CD8-positive, alpha-beta memory T cell (primary cell): ENCODE measurements at regions of chr6 and their contacts with region 1.

Region 1: DNA sequence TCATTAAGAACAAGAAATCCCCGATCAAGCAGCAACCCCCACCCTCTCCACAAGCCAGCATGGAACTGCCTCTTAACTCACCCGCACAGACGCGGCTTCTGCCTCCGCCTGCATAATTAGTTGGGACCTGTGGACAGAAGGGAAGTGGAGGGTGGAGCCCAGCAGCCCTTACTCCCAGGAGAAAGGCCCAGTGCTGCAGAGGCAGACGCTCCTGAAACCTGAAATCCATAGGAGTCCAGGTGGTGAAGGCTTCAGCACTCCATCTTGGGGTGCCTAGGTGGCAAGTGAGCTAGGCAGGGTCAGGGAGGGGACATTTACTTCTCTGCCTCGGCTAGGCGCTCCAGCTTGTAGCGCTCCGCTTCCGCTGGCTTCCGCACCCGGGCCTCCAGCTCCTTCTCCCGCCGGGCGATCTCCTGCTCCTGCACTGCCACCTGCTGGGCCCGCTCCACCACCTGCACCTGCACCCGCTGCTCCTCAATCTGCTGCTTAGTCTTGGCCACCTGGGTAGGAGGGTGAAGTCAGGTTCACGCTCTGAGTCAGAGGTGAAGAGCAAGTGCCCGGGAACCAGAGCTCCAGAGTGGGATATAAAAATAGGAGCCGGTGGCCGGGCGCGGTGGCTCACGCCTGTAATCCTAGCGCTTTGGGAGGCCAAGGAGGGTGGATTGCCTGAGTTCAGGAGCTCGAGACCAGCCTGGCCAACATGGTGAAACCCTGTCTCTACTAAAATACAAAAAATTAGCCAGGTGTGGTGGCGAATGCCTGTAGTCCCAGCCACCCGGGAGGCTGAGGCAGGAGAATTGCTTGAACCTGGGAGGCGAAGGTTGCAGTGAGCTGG is 10.7 kb downstream of the TUBB start:
- DNase-seq: peak; percentile 71 to 86 (median 73)
- H3K4me3 ChIP-seq: no peak overlapping the region
- H3K4me3 Mint-ChIP-seq: peak overlapping the region in 4 of 7 donors; percentile 23 to 43 (median 34)
- H3K27ac ChIP-seq: no peak overlapping the region
- H3K27ac Mint-ChIP-seq: peak overlapping the region in 7 of 8 donors; percentile 47 to 86 (median 65)
- H3K4me1 ChIP-seq: peaks cover 33% of the 10 kb centered on the region
- H3K4me1 Mint-ChIP-seq: peaks cover 23 to 49% (median 32%) of the 10 kb centered on the region in 3 donors
- H3K27me3 ChIP-seq: no peaks in the 10 kb centered on the region
- H3K27me3 Mint-ChIP-seq: no peaks in the 10 kb centered on the region

Region 2: DNA sequence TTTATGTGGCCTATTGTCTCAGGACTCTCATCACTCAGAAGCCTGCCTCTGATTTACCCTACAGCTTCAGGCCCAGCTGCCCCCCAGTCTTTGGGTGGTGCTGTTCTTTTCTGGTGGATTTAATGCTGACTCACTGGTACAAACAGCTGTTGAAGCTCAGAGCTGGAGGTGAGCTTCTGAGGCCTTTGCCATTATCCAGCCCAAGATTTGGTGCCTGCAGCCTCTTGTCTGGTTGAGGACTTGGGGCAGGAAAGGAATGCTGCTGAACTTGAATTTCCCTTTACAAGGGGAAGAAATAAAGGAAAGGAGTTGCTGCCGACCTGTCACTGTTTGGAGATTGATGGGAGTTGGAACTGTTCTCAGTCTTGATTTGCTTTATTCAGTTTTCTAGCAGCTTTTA is 139.8 kb before region 1 on chr6:
- CTCF ChIA-PET with region 1: interaction called, 12 read pairs
- POLR2A ChIA-PET with region 1: no interaction called
- DNase-seq: no peak
- H3K4me3 ChIP-seq: no peak overlapping the region
- H3K4me3 Mint-ChIP-seq: no peak overlapping the region
- H3K27ac ChIP-seq: no peak overlapping the region
- H3K27ac Mint-ChIP-seq: peak overlapping the region in 4 of 8 donors; percentile 69 to 85 (median 72)
- H3K4me1 ChIP-seq: no peaks in the 10 kb centered on the region
- H3K4me1 Mint-ChIP-seq: peaks cover 2 to 13% (median 7%) of the 10 kb centered on the region in 3 donors
- H3K27me3 ChIP-seq: no peaks in the 10 kb centered on the region
- H3K27me3 Mint-ChIP-seq: no peaks in the 10 kb centered on the region

Region 3: DNA sequence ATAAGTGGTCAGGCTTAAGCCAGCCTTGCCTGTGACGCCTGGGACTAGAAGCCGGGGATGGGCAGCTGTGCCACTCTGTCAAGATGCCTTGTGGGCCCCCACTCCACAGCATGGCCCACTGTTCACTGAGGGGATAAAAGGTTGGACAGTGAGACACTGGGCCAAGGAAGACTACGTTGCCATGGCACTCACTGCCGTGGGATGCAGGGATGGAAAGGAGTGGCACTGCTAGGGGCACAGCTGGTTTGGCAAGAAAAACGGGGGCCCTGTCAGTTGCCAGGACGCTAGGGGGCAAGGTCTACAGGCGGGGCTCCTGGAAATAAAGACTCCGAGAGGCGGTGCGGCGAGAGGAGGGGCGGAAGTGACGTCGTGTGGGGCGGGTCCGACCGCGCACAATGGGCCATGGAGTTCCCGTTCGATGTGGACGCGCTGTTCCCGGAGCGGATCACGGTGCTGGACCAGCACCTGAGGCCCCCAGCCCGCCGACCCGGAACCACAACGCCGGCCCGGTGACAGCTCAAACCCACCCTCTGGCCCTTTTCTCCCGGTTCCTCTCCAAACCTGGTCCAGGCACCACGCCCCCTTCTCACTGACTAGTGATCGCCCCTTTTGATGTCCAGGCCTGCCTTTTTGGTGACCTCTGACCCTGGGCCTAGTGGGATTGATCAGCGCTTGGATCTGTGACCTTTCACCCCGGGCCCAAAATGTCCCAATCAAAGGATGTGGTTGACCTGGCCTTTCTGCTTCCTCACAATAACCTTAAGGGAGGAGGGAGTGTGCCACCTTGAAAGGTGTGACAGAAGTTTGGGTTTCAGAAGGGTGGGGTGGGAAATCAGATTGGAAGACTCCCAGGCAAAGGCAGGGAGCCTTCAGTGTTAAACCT is 104.1 kb before region 1 on chr6 and contains the start of gene ATAT1:
- CTCF ChIA-PET with region 1: interaction called, 14 read pairs
- POLR2A ChIA-PET with region 1: no interaction called
- DNase-seq: peak; percentile 86 to 93 (median 88)
- H3K4me3 ChIP-seq: peak within 1 kb of the TSS; percentile 76
- H3K4me3 Mint-ChIP-seq: peak within 1 kb of the TSS; percentile 86 to 95 (median 93)
- H3K27ac ChIP-seq: peak within 1 kb of the TSS; percentile 89
- H3K27ac Mint-ChIP-seq: peak within 1 kb of the TSS; percentile 82 to 99 (median 98)
- H3K4me1 ChIP-seq: peaks cover 16% of the 10 kb centered on the region
- H3K4me1 Mint-ChIP-seq: peaks cover 19 to 25% (median 19%) of the 10 kb centered on the region in 3 donors
- H3K27me3 ChIP-seq: no peaks in the 10 kb centered on the region
- H3K27me3 Mint-ChIP-seq: no peaks in the 10 kb centered on the region
- total RNA-seq, gene ATAT1: 10.5 to 10.7 TPM

Region 4: DNA sequence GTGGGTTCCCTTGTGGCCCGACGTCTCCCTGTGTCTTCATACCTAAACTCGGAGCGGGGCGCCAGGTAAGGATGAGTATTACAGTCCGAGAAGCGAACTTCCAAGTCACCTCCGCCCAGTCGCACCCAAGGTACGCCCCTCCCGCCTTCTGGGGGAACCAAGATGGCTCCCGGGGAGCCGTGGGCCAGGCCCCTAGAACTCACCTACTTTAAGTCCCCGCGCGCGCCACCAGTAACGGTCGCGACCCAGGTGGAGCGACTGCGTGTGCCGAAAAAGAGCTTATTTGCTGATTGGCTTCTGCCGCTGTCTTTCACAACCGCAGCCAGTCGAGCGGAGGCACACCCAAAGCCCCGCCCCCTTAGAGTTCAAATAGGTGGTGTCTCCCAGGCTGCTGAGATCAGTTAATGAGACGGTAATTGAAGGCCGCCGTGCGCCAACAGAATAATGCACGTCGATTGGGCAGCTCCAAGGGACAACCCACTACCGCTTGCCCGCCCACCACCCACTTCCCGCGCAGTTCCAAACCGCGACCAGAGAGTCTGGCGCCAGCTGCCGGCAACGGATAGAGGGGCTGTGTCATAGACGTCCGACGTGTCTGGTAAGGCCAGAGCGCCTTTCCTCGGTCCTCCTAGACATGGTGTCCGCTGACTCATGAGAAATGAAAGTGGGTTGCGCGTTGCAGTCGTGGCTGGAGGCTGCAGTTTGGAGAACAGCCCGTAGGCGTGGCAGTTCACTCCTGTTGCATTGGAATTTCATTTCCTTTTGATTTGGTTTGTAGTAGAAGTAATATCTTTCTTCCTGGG is 13.6 kb before region 1 on chr6 and contains the start of gene MDC1:
- CTCF ChIA-PET with region 1: interaction called, 48 read pairs
- POLR2A ChIA-PET with region 1: interaction called, 6 read pairs
- DNase-seq: peak; percentile 97 to 100 (median 99)
- H3K4me3 ChIP-seq: peak within 1 kb of the TSS; percentile 85
- H3K4me3 Mint-ChIP-seq: peak within 1 kb of the TSS; percentile 90 to 98 (median 94)
- H3K27ac ChIP-seq: peak within 1 kb of the TSS; percentile 92
- H3K27ac Mint-ChIP-seq: peak within 1 kb of the TSS; percentile 92 to 100 (median 99)
- H3K4me1 ChIP-seq: peaks cover 20% of the 10 kb centered on the region
- H3K4me1 Mint-ChIP-seq: peaks cover 45 to 64% (median 46%) of the 10 kb centered on the region in 3 donors
- H3K27me3 ChIP-seq: no peaks in the 10 kb centered on the region
- H3K27me3 Mint-ChIP-seq: peaks cover 0 to 2% of the 10 kb centered on the region in 2 donors
- total RNA-seq, gene MDC1: 59.4 to 71.1 TPM

Region 5: GRCh38 chr6:30760549-30760948 is 29.7 kb after region 1 on chr6:
- CTCF ChIA-PET with region 1: no interaction called
- POLR2A ChIA-PET with region 1: no interaction called
- DNase-seq: no peak
- H3K4me3 ChIP-seq: no peak overlapping the region
- H3K4me3 Mint-ChIP-seq: no peak overlapping the region
- H3K27ac ChIP-seq: no peak overlapping the region
- H3K27ac Mint-ChIP-seq: no peak overlapping the region
- H3K4me1 ChIP-seq: peaks cover 12% of the 10 kb centered on the region
- H3K4me1 Mint-ChIP-seq: peaks cover 13 to 21% (median 19%) of the 10 kb centered on the region in 3 donors
- H3K27me3 ChIP-seq: no peaks in the 10 kb centered on the region
- H3K27me3 Mint-ChIP-seq: peaks cover 0 to 3% of the 10 kb centered on the region in 2 donors

Region 6: DNA sequence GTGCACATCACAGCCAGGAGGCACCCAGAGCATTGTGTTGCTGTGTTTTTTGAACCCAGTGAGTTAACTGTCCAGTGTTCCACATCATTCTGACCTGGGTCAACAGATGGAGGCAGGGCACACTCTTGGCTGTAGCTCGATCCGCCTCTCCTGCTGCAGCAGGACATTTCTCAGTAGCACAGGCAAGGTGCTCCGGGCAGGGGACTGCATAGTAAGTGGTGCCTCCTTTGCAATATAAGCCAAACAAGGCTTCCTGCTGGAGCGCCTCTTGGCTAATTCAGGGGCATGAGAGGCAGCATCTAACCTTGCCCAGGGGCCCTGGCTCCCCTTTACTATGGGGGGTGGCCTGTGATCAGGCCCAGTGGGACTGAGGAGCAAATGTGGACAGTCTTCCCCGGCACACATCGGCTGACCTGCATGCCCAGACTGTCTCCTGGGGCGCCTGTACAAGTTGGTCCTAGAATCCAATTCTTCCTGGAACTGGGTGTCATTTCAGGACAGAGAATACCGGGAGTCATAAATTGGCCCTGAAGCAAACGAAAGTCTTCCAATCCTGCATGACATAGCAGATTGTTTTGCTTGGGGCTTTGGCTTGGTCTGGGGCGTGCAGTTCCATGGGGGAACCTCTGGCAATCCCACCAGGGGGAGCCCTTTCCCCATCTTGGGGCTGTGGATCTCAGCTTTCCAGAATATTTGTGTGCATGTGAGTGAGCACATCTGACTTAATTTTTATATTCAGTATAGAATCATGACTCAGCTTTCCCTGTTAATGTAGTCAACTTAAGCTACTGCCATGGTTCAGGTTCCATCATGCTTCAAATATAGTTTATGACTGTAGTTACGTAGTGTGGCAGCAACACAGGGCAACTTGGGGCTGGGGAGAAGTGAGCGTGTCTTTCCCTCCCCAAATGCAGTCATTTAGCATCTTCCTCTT is 97.5 kb after region 1 on chr6:
- CTCF ChIA-PET with region 1: interaction called, 11 read pairs
- POLR2A ChIA-PET with region 1: no interaction called
- DNase-seq: peak; percentile 62 to 83 (median 67)
- H3K4me3 ChIP-seq: peak overlapping the region; percentile 73
- H3K4me3 Mint-ChIP-seq: peak overlapping the region; percentile 89 to 94 (median 93)
- H3K27ac ChIP-seq: peak overlapping the region; percentile 76
- H3K27ac Mint-ChIP-seq: peak overlapping the region; percentile 37 to 100 (median 95)
- H3K4me1 ChIP-seq: peaks cover 44% of the 10 kb centered on the region
- H3K4me1 Mint-ChIP-seq: peaks cover 69 to 90% (median 79%) of the 10 kb centered on the region in 3 donors
- H3K27me3 ChIP-seq: no peaks in the 10 kb centered on the region
- H3K27me3 Mint-ChIP-seq: peaks cover 0 to 4% of the 10 kb centered on the region in 2 donors

Region 7: GRCh38 chr6:30857549-30857948 is 126.7 kb after region 1 on chr6:
- CTCF ChIA-PET with region 1: no interaction called
- POLR2A ChIA-PET with region 1: no interaction called
- DNase-seq: no peak
- H3K4me3 ChIP-seq: no peak overlapping the region
- H3K4me3 Mint-ChIP-seq: no peak overlapping the region
- H3K27ac ChIP-seq: no peak overlapping the region
- H3K27ac Mint-ChIP-seq: no peak overlapping the region
- H3K4me1 ChIP-seq: no peaks in the 10 kb centered on the region
- H3K4me1 Mint-ChIP-seq: no peaks in the 10 kb centered on the region
- H3K27me3 ChIP-seq: no peaks in the 10 kb centered on the region
- H3K27me3 Mint-ChIP-seq: peaks cover 3 to 10% of the 10 kb centered on the region in 2 donors

Region 8: GRCh38 chr6:30990422-30991086 is 259.7 kb after region 1 on chr6:
- CTCF ChIA-PET with region 1: no interaction called
- POLR2A ChIA-PET with region 1: no interaction called
- DNase-seq: peak in 1 of 5 donors; percentile 17
- H3K4me3 ChIP-seq: no peak overlapping the region
- H3K4me3 Mint-ChIP-seq: peak overlapping the region; percentile 40 to 88 (median 76)
- H3K27ac ChIP-seq: no peak overlapping the region
- H3K27ac Mint-ChIP-seq: peak overlapping the region in 5 of 8 donors; percentile 3 to 75 (median 49)
- H3K4me1 ChIP-seq: peaks cover 4% of the 10 kb centered on the region
- H3K4me1 Mint-ChIP-seq: peaks cover 9 to 11% (median 11%) of the 10 kb centered on the region in 3 donors
- H3K27me3 ChIP-seq: no peaks in the 10 kb centered on the region
- H3K27me3 Mint-ChIP-seq: peaks cover 6 to 9% of the 10 kb centered on the region in 2 donors

Region 9: GRCh38 chr6:31513456-31514165 is 782.8 kb after region 1 on chr6:
- CTCF ChIA-PET with region 1: no interaction called
- POLR2A ChIA-PET with region 1: no interaction called
- DNase-seq: no peak
- H3K4me3 ChIP-seq: no peak overlapping the region
- H3K4me3 Mint-ChIP-seq: no peak overlapping the region
- H3K27ac ChIP-seq: no peak overlapping the region
- H3K27ac Mint-ChIP-seq: no peak overlapping the region
- H3K4me1 ChIP-seq: no peaks in the 10 kb centered on the region
- H3K4me1 Mint-ChIP-seq: no peaks in the 10 kb centered on the region
- H3K27me3 ChIP-seq: no peaks in the 10 kb centered on the region
- H3K27me3 Mint-ChIP-seq: peaks cover 2 to 8% of the 10 kb centered on the region in 2 donors